Activated T-helper 1 cell treated with anti-CD3 and anti-CD28 coated beads, Interleukin-12 subunit alpha, Interleukin-12 subunit beta, Interleukin-2, Interleukin-4 antibody, amounts not matched to agents 30 ng/mL and 10 ng/mL and 1 ng/mL, durations not matched to agents 14 hours and 24 hours and 36 hours (primary cell): ENCODE measurements at regions of chr9 and their contacts with region 1.

Region 1: GRCh38 chr9:133406480-133407307 is 11.1 kb downstream of the REXO4 start:
- DNase-seq: peak; percentile 67
- H3K4me3 Mint-ChIP-seq: no peak overlapping the region
- H3K27ac Mint-ChIP-seq: peak overlapping the region; percentile 82
- H3K4me1 Mint-ChIP-seq: peaks cover 9% of the 10 kb centered on the region
- H3K27me3 Mint-ChIP-seq: no peaks in the 10 kb centered on the region

Region 2: DNA sequence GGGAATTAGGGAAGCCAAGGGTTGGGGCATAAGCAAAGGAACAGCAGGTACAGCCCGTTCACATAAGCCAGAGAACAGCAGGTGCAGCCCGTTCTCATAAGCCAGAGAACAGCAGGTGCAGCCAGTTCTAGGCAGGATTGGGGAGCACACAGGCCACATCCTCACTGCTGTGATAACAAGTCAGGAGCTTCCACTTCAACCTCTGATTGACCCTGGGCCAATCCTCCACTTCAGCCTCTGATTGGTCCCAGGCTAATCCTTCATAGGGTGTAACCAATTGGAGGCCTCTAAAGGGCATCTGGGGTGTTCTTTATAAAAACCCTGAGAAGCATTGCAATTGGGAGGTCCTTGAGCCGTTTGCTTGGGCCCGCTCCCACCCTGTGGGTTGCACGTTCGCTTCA is 317.4 kb before region 1 on chr9:
- intact Hi-C with region 1: no loop called
- DNase-seq: no peak
- H3K4me3 Mint-ChIP-seq: no peak overlapping the region
- H3K27ac Mint-ChIP-seq: no peak overlapping the region
- H3K4me1 Mint-ChIP-seq: no peaks in the 10 kb centered on the region
- H3K27me3 Mint-ChIP-seq: no peaks in the 10 kb centered on the region

Region 3: DNA sequence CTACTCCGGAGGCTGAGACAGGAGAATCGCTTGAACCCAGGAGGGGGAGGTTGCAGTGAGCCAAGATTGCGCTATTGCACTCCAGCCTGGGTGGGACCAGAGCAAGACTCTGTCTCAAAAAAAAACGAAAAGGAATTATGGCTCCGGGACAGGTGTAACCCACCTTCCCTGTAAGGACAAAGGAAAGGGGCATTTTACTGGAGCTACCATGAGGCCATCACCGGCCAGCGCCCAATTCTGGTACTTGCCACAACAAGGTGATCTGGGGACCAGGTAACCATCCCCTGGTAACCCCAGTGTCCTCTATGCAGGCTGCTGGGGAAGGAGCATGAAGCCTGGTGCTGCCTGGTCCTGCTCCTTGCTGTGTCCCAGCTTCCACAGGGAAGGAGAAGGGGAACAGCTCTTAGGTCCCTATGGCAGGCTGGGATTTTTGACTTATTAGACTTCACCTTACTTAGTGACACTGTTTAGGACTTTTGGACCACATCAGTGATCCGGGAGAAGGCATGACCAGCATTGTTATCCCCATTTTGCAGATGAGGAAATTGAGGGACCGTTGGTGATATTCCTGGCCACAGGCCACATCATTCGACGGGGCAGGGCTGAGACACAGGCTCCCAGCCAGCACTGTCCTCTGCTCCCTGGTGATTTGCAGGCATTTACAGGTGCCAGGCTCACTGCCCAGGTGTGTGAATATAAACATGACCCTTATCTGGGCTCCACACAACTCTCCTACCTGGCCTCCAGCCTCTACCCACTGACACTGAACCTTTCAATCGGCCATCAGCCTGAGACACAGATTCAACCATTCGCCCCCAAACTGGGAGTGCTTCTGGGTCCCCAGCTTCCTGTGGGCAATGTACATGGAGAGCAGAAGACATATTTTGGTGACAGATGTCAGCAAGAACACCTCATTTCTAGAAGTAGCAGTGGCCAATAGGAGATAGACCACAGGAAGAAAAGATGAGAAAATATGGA is 105.2 kb before region 1 on chr9:
- intact Hi-C with region 1: no loop called
- DNase-seq: no peak
- H3K4me3 Mint-ChIP-seq: no peak overlapping the region
- H3K27ac Mint-ChIP-seq: no peak overlapping the region
- H3K4me1 Mint-ChIP-seq: no peaks in the 10 kb centered on the region
- H3K27me3 Mint-ChIP-seq: peaks cover 14% of the 10 kb centered on the region

Region 4: GRCh38 chr9:133394687-133395271 is 11.9 kb before region 1 on chr9:
- intact Hi-C with region 1: no loop called
- DNase-seq: no peak
- H3K4me3 Mint-ChIP-seq: no peak overlapping the region
- H3K27ac Mint-ChIP-seq: no peak overlapping the region
- H3K4me1 Mint-ChIP-seq: no peaks in the 10 kb centered on the region
- H3K27me3 Mint-ChIP-seq: peaks cover 5% of the 10 kb centered on the region

Region 5: GRCh38 chr9:133459476-133460404 is 53.0 kb after region 1 on chr9 and contains the start of gene CACFD1:
- intact Hi-C with region 1: loop called (anchors 1 kb)
- DNase-seq: peak; percentile 80
- H3K4me3 Mint-ChIP-seq: peak within 1 kb of the TSS; percentile 86
- H3K27ac Mint-ChIP-seq: peak within 1 kb of the TSS; percentile 77
- H3K4me1 Mint-ChIP-seq: no peaks in the 10 kb centered on the region
- H3K27me3 Mint-ChIP-seq: peaks cover 11% of the 10 kb centered on the region
- total RNA-seq, gene CACFD1: 1.0 and 1.1 TPM in 2 replicates

Region 6: DNA sequence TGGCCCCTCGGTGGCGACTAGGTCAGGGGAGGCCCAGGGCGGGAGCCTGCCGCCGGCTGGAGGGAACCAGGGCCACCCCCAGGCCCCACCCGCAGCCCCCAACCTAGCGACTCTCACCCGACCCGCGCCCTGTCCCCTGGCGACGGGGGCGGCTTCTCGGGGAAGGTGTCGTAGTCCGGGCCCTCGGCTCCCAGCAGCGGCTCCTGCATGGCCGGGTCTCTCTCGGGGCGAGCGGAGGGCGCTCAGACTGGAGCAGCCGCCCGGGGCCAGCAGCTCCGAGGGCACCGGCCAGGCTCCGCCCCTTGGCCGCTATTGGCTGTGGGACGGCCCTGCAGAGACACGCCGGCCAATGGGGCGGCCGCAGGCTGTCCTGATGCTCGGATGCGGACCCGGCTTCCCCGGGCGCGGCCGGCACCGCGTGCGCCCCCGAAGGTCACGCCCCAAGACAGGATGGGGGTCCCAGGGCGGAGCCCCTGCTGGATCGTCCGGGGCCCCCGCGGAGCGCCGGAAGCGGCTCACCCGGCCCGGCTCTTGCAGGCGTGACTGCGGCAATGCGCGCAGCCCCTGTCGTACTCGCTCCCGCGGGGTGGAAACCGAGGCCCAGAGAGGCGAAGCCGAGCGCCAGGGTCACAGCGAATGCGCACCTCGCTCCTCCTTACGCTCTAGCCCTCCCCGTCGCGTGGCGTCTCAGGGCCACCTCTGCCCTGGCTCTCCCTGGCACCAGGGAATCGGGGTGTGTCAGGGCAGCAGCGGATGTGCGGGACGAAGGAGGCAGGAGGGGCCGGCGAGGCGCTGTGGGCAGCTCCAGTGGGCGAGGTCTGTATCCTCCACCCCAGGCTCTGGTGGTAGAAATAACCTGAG is 72.4 kb after region 1 on chr9 and contains the start of gene SLC2A6:
- intact Hi-C with region 1: loop called (anchors 2 kb)
- DNase-seq: peak; percentile 82
- H3K4me3 Mint-ChIP-seq: peak within 1 kb of the TSS; percentile 79
- H3K27ac Mint-ChIP-seq: no peak within 1 kb of the TSS
- H3K4me1 Mint-ChIP-seq: peaks cover 6% of the 10 kb centered on the region
- H3K27me3 Mint-ChIP-seq: peaks cover 13% of the 10 kb centered on the region
- total RNA-seq, gene SLC2A6: 4.1 and 4.6 TPM in 2 replicates

Region 7: GRCh38 chr9:133726401-133727276 is 319.9 kb after region 1 on chr9:
- intact Hi-C with region 1: loop called (anchors 5 kb)
- DNase-seq: no peak
- H3K4me3 Mint-ChIP-seq: no peak overlapping the region
- H3K27ac Mint-ChIP-seq: no peak overlapping the region
- H3K4me1 Mint-ChIP-seq: no peaks in the 10 kb centered on the region
- H3K27me3 Mint-ChIP-seq: peaks cover 11% of the 10 kb centered on the region